Heart right ventricle (tissue), 16 donors: ENCODE measurements at regions of chr21 and their contacts with region 1.

Region 1: DNA sequence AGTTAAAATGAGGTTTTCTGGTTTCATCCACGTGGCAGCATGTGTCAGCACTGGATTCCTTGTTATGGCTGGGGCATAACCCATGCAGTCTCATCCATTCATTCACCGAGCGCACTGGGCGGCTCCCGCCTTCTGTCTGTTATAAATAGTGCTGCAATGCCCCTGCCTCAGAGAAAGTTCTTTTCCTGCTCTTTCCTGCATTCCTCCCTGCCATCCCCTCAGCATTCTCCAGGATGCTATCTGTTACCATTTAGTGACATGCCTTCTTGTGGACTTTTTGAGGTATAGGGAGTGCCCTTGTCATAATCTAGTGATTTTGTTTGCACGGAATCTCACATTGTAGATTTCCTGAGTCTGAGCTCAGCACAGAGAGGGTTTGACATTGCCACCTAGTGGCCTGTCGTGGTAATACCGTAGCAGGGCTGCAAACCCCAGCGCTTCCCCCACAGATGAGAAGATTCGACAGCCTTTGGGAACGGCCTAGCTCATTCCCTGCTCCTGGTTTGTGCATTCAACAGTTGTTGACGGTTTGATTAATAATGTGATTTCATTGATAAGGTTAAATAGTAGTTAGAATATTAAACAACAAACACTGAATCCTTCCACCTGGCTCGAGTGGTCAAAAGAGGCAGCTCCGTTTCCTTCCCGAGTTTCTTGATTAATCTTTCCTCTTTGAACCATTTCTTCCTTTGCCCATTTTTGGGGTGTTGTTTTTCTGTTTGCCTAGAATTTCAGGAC is 46.3 kb downstream of the UMODL1 start:
- DNase-seq: peak; percentile 65 to 68
- ATAC-seq: peak; percentile 69 to 84 (median 78)
- H3K4me3 ChIP-seq: peak overlapping the region in 3 of 10 donors; percentile 1 to 31 (median 9)
- H3K27ac ChIP-seq: no peak overlapping the region
- H3K4me1 ChIP-seq: peaks cover 0 to 27% (median 11%) of the 10 kb centered on the region in 9 donors
- H3K27me3 ChIP-seq: peaks cover 0 to 81% (median 55%) of the 10 kb centered on the region in 7 donors
- CTCF ChIP-seq: peak; percentile 91 to 96 (median 94)

Region 2: GRCh38 chr21:41612674-41613532 is 504.5 kb before region 1 on chr21:
- intact Hi-C with region 1: loop called in 7 of 10 experiments (anchors 2 to 10 kb)
- DNase-seq: peak; percentile 63 to 70
- ATAC-seq: peak; percentile 84 to 92 (median 88)
- H3K4me3 ChIP-seq: no peak overlapping the region
- H3K27ac ChIP-seq: peak overlapping the region in 5 of 10 donors; percentile 9 to 51 (median 21)
- H3K4me1 ChIP-seq: peaks cover 0 to 35% (median 14%) of the 10 kb centered on the region in 9 donors
- H3K27me3 ChIP-seq: peaks cover 0 to 56% (median 32%) of the 10 kb centered on the region in 7 donors
- CTCF ChIP-seq: peak; percentile 43 to 83 (median 78)

Region 3: GRCh38 chr21:41926117-41926806 is 191.1 kb before region 1 on chr21:
- intact Hi-C with region 1: loop called in 3 of 10 experiments (anchors 5 to 10 kb)
- DNase-seq: no peak
- ATAC-seq: peak in 6 of 8 donors; percentile 66 to 82 (median 76)
- H3K4me3 ChIP-seq: peak overlapping the region in 9 of 10 donors; percentile 28 to 56 (median 47)
- H3K27ac ChIP-seq: peak overlapping the region; percentile 59 to 94 (median 84)
- H3K4me1 ChIP-seq: peaks cover 6 to 81% (median 56%) of the 10 kb centered on the region in 9 donors
- H3K27me3 ChIP-seq: no peaks in the 10 kb centered on the region
- CTCF ChIP-seq: no peak

Region 4: GRCh38 chr21:41948078-41948895 is 169.1 kb before region 1 on chr21:
- intact Hi-C with region 1: loop called in 3 of 10 experiments (anchors 10 kb)
- DNase-seq: no peak
- ATAC-seq: peak in 7 of 8 donors; percentile 28 to 57 (median 36)
- H3K4me3 ChIP-seq: no peak overlapping the region
- H3K27ac ChIP-seq: peak overlapping the region in 1 of 10 donors; percentile 34
- H3K4me1 ChIP-seq: peaks cover 10 to 58% (median 29%) of the 10 kb centered on the region in 9 donors
- H3K27me3 ChIP-seq: peaks cover 0 to 8% (median 0%) of the 10 kb centered on the region in 7 donors
- CTCF ChIP-seq: no peak

Region 5: DNA sequence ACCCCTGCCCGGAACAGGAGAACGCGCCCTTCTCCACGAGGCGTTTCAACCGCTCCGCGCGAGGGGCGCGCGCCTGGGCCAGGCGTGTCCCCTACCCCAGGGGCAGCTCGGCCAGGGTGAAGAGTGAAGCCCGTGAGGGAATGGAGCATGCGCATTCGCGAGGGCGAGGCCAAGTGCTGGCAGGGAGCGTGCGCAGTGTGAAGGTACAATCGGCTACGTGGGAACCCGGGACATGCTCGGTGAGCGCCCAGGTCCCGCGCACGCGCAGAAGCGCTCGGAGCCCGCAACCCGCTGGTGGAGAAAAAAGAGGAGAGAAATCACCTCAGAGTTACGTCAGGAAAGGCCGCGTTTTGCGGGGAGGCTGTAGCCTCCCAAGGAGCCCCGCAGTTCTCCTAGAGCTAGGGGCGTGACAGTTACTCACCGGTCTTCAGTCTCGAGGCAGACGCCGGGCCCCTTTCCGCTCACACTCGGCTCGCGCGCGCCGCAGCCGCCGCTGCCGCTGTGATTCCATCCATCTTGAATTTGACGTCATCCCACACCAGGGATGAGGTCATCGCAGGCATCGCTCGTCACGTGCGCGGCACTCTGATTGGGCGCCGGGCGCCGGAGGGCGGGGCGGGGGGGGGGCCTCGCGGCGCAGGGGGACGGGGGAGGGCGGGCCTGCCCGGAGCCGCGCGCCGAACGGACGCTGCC is 107.4 kb before region 1 on chr21 and contains the start of gene ZBTB21:
- intact Hi-C with region 1: loop called in 4 of 10 experiments (anchors 5 kb)
- DNase-seq: peak; percentile 99
- ATAC-seq: peak; percentile 96 to 99 (median 98)
- H3K4me3 ChIP-seq: peak within 1 kb of the TSS; percentile 75 to 94 (median 83)
- H3K27ac ChIP-seq: peak within 1 kb of the TSS; percentile 92 to 99 (median 98)
- H3K4me1 ChIP-seq: peaks cover 5 to 28% (median 11%) of the 10 kb centered on the region in 9 donors
- H3K27me3 ChIP-seq: peaks cover 0 to 5% (median 0%) of the 10 kb centered on the region in 7 donors
- CTCF ChIP-seq: no peak
- total RNA-seq, gene ZBTB21: 3.8 to 15.2 (median 6.6) TPM

Region 6: GRCh38 chr21:42997053-42997452 is 879.7 kb after region 1 on chr21:
- intact Hi-C with region 1: no loop called
- DNase-seq: peak; percentile 32 to 36
- ATAC-seq: peak; percentile 53 to 89 (median 74)
- H3K4me3 ChIP-seq: no peak overlapping the region
- H3K27ac ChIP-seq: peak overlapping the region in 8 of 10 donors; percentile 20 to 58 (median 46)
- H3K4me1 ChIP-seq: peaks cover 0 to 27% (median 9%) of the 10 kb centered on the region in 9 donors
- H3K27me3 ChIP-seq: no peaks in the 10 kb centered on the region
- CTCF ChIP-seq: no peak